ENCODE measurements at regions of chr2 and their contacts with region 1.

Region 1: DNA sequence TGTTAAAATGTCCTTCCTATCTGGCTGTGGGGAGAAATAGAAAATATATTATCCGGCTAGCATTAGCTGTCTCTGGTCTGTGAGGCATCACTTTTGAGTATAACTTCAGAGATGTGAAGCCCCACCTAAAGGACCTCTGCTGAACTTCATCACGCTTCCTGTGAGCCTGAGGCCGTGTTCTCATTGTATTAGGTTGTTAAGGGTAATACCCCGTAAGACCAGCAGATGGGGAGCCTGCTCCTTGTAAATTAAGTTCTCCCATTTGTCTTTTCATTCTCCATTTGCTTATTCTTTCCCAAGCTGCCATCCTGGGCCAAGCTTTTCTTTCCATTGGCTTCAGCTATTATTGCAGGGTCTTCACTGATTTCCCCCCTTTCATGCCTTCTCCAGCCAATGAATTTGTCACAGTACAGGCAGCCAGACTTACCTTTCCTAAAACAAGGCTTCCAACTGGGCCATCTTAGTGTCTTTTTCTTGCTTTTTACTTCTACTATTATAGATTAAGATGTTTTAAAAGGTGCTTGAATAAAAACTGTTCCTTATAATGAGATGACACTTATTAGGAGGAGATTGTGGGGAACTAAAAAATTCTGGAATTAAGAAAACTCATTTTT is 12.4 kb downstream of the NIF3L1 start:
- DNase-seq: no peak
- ATAC-seq: peak; percentile 67 to 86 (median 86)
- H3K4me3 ChIP-seq: no peak overlapping the region
- H3K27ac ChIP-seq: no peak overlapping the region
- H3K4me1 ChIP-seq: peaks cover 9% of the 10 kb centered on the region
- H3K27me3 ChIP-seq: no peaks in the 10 kb centered on the region
- CTCF ChIP-seq: peak; percentile 60

Region 2: DNA sequence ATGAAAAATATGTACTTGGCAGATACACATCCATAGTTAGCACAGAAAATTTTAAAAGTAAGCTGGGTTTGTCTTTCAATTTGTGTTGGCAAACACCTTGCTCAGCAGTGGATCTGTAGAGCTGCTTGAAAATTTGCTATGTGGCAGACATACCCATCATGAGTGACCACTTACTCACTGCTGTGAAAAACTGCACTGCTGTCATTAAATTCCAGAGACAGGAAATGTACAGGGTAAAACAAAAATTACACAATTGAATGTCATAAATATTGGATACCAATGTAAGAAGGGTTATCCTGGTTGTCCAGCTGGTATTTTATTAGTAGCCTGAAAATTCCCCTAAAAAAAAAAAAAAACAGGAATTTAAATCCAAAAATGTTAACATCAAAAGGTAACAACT is 12.1 kb after region 1 on chr2:
- intact Hi-C with region 1: loop called in 1 of 2 experiments (anchors 1 kb)
- DNase-seq: no peak
- ATAC-seq: no peak
- H3K4me3 ChIP-seq: no peak overlapping the region
- H3K27ac ChIP-seq: no peak overlapping the region
- H3K4me1 ChIP-seq: no peaks in the 10 kb centered on the region
- H3K27me3 ChIP-seq: no peaks in the 10 kb centered on the region
- CTCF ChIP-seq: no peak

Region 3: GRCh38 chr2:201064797-201065329 is 163.3 kb after region 1 on chr2:
- intact Hi-C with region 1: loop called (anchors 2 to 5 kb)
- DNase-seq: no peak
- ATAC-seq: no peak
- H3K4me3 ChIP-seq: no peak overlapping the region
- H3K27ac ChIP-seq: no peak overlapping the region
- H3K4me1 ChIP-seq: peaks cover 33% of the 10 kb centered on the region
- H3K27me3 ChIP-seq: no peaks in the 10 kb centered on the region
- CTCF ChIP-seq: no peak

Region 4: GRCh38 chr2:201071479-201072200 is 170.1 kb after region 1 on chr2 and contains the starts of genes HYCC2 and NDUFB3:
- intact Hi-C with region 1: loop called (anchors 2 to 5 kb)
- DNase-seq: peak; percentile 87 to 95
- ATAC-seq: peak; percentile 98 to 100 (median 99)
- H3K4me3 ChIP-seq: peak within 1 kb of the TSS; percentile 92
- H3K27ac ChIP-seq: peak within 1 kb of the TSS; percentile 95
- H3K4me1 ChIP-seq: peaks cover 55% of the 10 kb centered on the region
- H3K27me3 ChIP-seq: no peaks in the 10 kb centered on the region
- CTCF ChIP-seq: peak; percentile 36
- total RNA-seq, gene HYCC2: 7.6 to 8.6 (median 8.1) TPM
- total RNA-seq, gene NDUFB3: 188 to 271 (median 261) TPM

Region 5: DNA sequence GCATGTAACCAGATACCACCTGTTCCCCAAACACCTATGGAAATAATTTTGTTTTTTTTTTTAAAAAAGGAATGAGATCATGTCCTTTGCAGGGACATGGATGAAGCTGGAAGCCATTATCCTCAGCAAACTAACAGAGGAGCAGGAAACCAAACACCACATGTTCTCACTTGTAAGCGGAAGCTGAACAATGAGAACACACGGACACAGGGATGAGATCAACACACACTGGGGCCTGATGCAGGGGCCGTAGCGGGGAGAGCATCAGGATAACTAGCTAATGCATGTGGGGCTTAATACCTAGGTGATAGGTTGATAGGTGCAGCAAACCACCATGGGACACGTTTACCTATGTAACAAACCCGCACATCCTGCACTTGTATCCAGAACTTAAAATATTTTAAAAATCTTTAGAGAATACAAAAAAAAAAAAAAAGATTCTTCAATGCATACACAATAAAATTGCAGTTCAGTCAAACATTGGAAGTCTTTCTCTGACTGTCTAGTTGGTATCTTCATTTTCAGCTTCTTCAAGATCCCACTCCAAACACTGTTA is 269.8 kb after region 1 on chr2:
- intact Hi-C with region 1: loop called in 1 of 2 experiments (anchors 2 kb)
- DNase-seq: no peak
- ATAC-seq: peak; percentile 11 to 30 (median 20)
- H3K4me3 ChIP-seq: no peak overlapping the region
- H3K27ac ChIP-seq: no peak overlapping the region
- H3K4me1 ChIP-seq: no peaks in the 10 kb centered on the region
- H3K27me3 ChIP-seq: no peaks in the 10 kb centered on the region
- CTCF ChIP-seq: no peak

Region 6: GRCh38 chr2:201182650-201183364 is 281.2 kb after region 1 on chr2 and contains the start of gene CASP10:
- intact Hi-C with region 1: loop called in 1 of 2 experiments (anchors 5 kb)
- DNase-seq: no peak
- ATAC-seq: no peak
- H3K4me3 ChIP-seq: peak within 1 kb of the TSS; percentile 62
- H3K27ac ChIP-seq: peak within 1 kb of the TSS; percentile 50
- H3K4me1 ChIP-seq: no peaks in the 10 kb centered on the region
- H3K27me3 ChIP-seq: no peaks in the 10 kb centered on the region
- CTCF ChIP-seq: no peak
- total RNA-seq, gene CASP10: 2.3 to 3.8 (median 2.8) TPM

Region 7: DNA sequence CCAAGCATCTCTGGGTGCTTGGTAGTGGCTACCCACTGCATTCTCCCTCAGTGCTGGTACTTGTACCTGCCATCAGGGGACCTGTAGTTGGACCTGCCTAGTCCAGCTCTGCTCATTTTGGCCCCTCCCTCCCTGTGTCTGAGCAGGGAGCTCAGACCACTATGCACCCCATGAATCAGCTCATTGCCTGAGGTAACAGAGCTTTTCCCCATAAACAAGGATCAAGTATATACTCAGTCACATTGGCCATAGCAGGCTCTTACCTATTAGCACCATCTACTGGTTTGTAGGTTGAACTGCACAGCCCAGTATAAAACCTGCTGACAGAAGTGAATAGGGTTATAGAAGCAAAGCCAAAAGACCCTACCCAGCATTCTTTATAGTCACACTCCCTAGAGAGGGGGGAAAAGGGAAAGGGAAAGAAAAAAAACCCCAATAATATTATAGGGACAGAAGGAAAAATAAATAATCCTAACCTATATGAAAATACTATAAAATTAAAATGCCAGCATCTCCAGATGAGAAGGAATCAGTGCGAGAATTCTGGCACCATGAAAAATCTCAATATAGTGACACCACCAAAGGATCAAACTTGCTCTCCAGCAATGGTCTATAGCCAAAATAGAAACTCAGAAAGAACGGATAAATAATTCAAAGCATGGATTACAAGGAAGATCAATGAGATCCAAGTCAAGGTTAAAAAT is 462.4 kb after region 1 on chr2:
- intact Hi-C with region 1: loop called in 1 of 2 experiments (anchors 10 kb)
- DNase-seq: no peak
- ATAC-seq: peak; percentile 61 to 75 (median 69)
- H3K4me3 ChIP-seq: no peak overlapping the region
- H3K27ac ChIP-seq: no peak overlapping the region
- H3K4me1 ChIP-seq: no peaks in the 10 kb centered on the region
- H3K27me3 ChIP-seq: no peaks in the 10 kb centered on the region
- CTCF ChIP-seq: peak; percentile 63